ENCODE measurements at regions of chr5 and their contacts with region 1.

Region 1: GRCh38 chr5:126776497-126777256 is at the start of gene LMNB1:
- DNase-seq: peak in 1 of 2 donors; percentile 94
- H3K4me3 ChIP-seq: peak within 1 kb of the TSS; percentile 80 to 90
- H3K27ac ChIP-seq: peak within 1 kb of the TSS; percentile 87
- H3K4me1 ChIP-seq: peaks cover 16% of the 10 kb centered on the region
- H3K27me3 ChIP-seq: no peaks in the 10 kb centered on the region
- CTCF ChIP-seq: peak in 1 of 3 experiments; percentile 10
- POLR2A ChIP-seq: no peak
- total RNA-seq, gene LMNB1: 20.9 TPM

Region 2: GRCh38 chr5:126422989-126423788 is 353.5 kb before region 1 on chr5 and contains the start of gene GRAMD2B:
- intact Hi-C with region 1: no loop called
- DNase-seq: peak in 1 of 2 donors; percentile 94
- H3K4me3 ChIP-seq: peak within 1 kb of the TSS; percentile 57 to 74
- H3K27ac ChIP-seq: peak within 1 kb of the TSS; percentile 86
- H3K4me1 ChIP-seq: peaks cover 34% of the 10 kb centered on the region
- H3K27me3 ChIP-seq: no peaks in the 10 kb centered on the region
- CTCF ChIP-seq: no peak
- POLR2A ChIP-seq: peak in 1 of 2 donors; percentile 82
- total RNA-seq, gene GRAMD2B: 76.9 TPM

Region 3: GRCh38 chr5:126676195-126676624 is 100.5 kb before region 1 on chr5:
- intact Hi-C with region 1: loop called (anchors 5 kb)
- DNase-seq: no peak
- H3K4me3 ChIP-seq: no peak overlapping the region
- H3K27ac ChIP-seq: no peak overlapping the region
- H3K4me1 ChIP-seq: no peaks in the 10 kb centered on the region
- H3K27me3 ChIP-seq: no peaks in the 10 kb centered on the region
- CTCF ChIP-seq: peak; percentile 27 to 77 (median 73)
- POLR2A ChIP-seq: no peak

Measured in vagina (tissue), 2 donors.